Activated CD4-positive, alpha-beta T cell treated with anti-CD3 and anti-CD28 coated beads, Interleukin-2, amount 10 ng/mL, durations not matched to agents 7 days and 5 days (primary cell): ENCODE measurements at regions of chr17 and their contacts with region 1.

Region 1: GRCh38 chr17:10646392-10646990 is 10.6 kb downstream of the MYH3 start:
- DNase-seq: peak; percentile 83
- H3K4me3 Mint-ChIP-seq: no peak overlapping the region
- H3K27ac Mint-ChIP-seq: no peak overlapping the region
- H3K4me1 Mint-ChIP-seq: no peaks in the 10 kb centered on the region
- H3K27me3 Mint-ChIP-seq: no peaks in the 10 kb centered on the region

Region 2: DNA sequence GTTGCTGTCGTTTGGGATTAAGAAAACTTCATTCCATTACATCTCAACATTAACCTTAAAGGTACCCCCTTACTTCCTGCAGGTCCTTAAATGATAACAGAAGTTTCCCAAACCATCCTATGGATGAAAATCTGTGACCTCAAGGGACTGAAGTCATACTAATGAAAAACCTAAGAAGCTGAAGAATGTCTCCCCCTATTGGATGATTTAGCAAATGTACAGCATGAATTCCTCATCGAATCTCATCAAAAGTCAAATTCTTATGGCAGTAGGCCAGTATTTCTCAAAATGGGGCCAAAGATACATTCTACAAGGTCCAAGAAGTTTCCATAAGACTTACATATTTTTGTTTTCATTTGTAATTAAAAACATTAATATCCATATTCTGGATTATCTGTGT is 37.4 kb after region 1 on chr17:
- CTCF ChIA-PET with region 1: no interaction called
- POLR2A ChIA-PET with region 1: no interaction called
- DNase-seq: no peak
- H3K4me3 Mint-ChIP-seq: no peak overlapping the region
- H3K27ac Mint-ChIP-seq: no peak overlapping the region
- H3K4me1 Mint-ChIP-seq: peaks cover 7% of the 10 kb centered on the region
- H3K27me3 Mint-ChIP-seq: no peaks in the 10 kb centered on the region

Region 3: GRCh38 chr17:10844621-10845387 is 198.3 kb after region 1 on chr17:
- CTCF ChIA-PET with region 1: interaction called, 19 read pairs
- POLR2A ChIA-PET with region 1: no interaction called
- DNase-seq: peak; percentile 76
- H3K4me3 Mint-ChIP-seq: peak overlapping the region; percentile 65
- H3K27ac Mint-ChIP-seq: no peak overlapping the region
- H3K4me1 Mint-ChIP-seq: peaks cover 7% of the 10 kb centered on the region
- H3K27me3 Mint-ChIP-seq: no peaks in the 10 kb centered on the region